Panc1 (cell line): ENCODE measurements at regions of chr9 and their contacts with region 1.

Region 1: DNA sequence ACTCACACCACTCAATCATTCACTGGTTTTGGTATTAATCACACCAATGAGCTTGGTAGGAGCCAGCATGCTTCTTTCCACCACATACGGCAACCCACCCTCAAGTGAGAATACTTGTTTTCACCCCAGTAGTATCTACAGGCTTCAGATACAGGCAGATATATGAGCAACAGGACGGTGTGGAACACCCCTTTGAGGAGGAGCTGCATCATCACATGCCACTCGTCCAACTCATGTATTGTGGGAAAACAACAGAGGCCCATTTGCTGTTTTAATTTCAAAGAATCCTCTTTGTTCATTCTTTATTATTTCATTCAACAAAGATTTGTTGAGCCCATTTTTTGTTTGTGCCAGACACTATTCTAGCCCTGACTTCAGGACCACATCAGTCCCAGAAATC is 46.0 kb downstream of the RORB start:
- DNase-seq: no peak
- ATAC-seq: no peak
- H3K4me3 ChIP-seq: no peak overlapping the region
- H3K27ac ChIP-seq: no peak overlapping the region
- H3K4me1 ChIP-seq: no peaks in the 10 kb centered on the region
- H3K27me3 ChIP-seq: no peaks in the 10 kb centered on the region
- CTCF ChIP-seq: no peak

Region 2: GRCh38 chr9:74497748-74498620 is 45.2 kb before region 1 on chr9:
- CTCF ChIA-PET with region 1: no interaction called
- POLR2A ChIA-PET with region 1: no interaction called
- in situ Hi-C with region 1: no loop called
- intact Hi-C with region 1: loop called (anchors 1 kb)
- DNase-seq: no peak
- ATAC-seq: peak; percentile 70
- H3K4me3 ChIP-seq: peak overlapping the region; percentile 32 to 68
- H3K27ac ChIP-seq: no peak overlapping the region
- H3K4me1 ChIP-seq: no peaks in the 10 kb centered on the region; the same call in 1 of the 2 replicates
- H3K27me3 ChIP-seq: peaks cover 5% of the 10 kb centered on the region; the same call in 1 of the 2 replicates
- CTCF ChIP-seq: no peak

Region 3: DNA sequence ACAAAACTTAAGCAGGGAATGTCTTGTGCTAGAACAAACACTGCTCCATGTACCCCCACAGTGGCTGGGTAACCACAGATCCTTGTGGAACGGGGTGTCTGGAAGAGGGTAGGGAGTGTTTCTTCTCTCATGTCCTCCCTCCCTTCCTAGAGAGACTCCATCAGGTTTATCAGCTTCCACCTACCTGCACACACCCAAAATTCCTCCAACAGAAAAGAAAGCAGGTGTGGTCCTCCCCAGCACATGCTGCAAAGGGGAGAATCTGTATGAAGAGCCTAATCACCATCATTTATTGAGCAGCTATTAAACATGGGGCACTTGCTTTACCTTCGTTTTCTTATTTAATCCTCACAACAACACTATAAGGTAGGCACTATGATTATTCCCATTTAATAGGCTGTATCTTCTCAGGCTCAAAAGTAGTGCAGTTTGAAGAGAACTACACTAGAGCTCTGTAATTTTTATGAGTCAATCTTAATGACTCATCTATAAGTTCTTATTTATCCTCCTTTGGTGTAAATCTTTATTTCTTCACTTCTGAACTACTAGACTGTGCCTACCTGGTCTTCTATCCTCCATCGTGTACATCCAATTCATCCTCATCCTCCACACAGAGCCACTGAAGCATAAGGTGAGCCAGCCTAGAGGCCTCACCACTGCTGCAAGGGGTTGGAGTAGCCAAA is 377.9 kb after region 1 on chr9:
- CTCF ChIA-PET with region 1: no interaction called
- POLR2A ChIA-PET with region 1: no interaction called
- in situ Hi-C with region 1: no loop called
- intact Hi-C with region 1: no loop called
- DNase-seq: no peak
- ATAC-seq: no peak
- H3K4me3 ChIP-seq: no peak overlapping the region
- H3K27ac ChIP-seq: no peak overlapping the region
- H3K4me1 ChIP-seq: no peaks in the 10 kb centered on the region
- H3K27me3 ChIP-seq: no peaks in the 10 kb centered on the region
- CTCF ChIP-seq: no peak